SK-N-SH (cell line): ENCODE measurements at regions of chr14 and their contacts with region 1.

Region 1: GRCh38 chr14:100383727-100384158 is 60.6 kb downstream of the SLC25A47 start:
- DNase-seq: peak; percentile 87
- H3K4me3 ChIP-seq: peak overlapping the region in 1 of 2 experiments; percentile 15; a peak in 1 of 4 replicates
- H3K27ac ChIP-seq: peak overlapping the region in 1 of 2 experiments; percentile 90; a peak in 2 of 4 replicates
- H3K4me1 ChIP-seq: peaks cover 10 to 46% of the 10 kb centered on the region in 2 experiments
- H3K27me3 ChIP-seq: no peaks in the 10 kb centered on the region
- CTCF ChIP-seq: peak; percentile 83
- EP300 ChIP-seq: no peak
- RAD21 ChIP-seq: peak; percentile 88

Region 2: GRCh38 chr14:100213956-100214774 is 169.6 kb before region 1 on chr14:
- CTCF ChIA-PET with region 1: no interaction called
- POLR2A ChIA-PET with region 1: no interaction called
- DNase-seq: peak; percentile 98
- H3K4me3 ChIP-seq: peak overlapping the region; percentile 60
- H3K27ac ChIP-seq: peak overlapping the region in 1 of 2 experiments; percentile 85; a peak in 2 of 4 replicates
- H3K4me1 ChIP-seq: peaks cover 6 to 10% of the 10 kb centered on the region in 2 experiments; a peak in 1 of 4 replicates
- H3K27me3 ChIP-seq: no peaks in the 10 kb centered on the region
- CTCF ChIP-seq: no peak
- EP300 ChIP-seq: no peak
- RAD21 ChIP-seq: no peak

Region 3: DNA sequence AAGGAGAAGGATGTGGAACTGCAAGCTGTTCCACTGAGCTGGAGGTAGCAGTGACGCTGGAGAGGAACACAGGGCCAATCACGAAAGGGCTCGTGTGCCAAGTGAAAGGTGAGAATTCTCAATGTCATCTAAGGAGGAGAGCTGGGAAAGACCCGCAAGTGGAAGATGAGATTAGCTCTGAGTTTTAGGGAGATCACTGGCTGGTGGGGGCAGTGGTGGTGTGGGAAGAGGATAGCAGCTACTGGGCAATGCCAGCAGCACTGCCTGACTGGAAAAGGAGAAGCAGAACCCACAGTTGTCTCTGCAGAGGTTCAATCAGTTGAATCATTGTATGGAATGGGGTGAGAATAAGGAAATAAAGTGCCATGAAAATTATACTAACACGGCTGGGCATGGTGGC is 32.8 kb before region 1 on chr14:
- CTCF ChIA-PET with region 1: no interaction called
- POLR2A ChIA-PET with region 1: no interaction called
- DNase-seq: no peak
- H3K4me3 ChIP-seq: no peak overlapping the region
- H3K27ac ChIP-seq: no peak overlapping the region
- H3K4me1 ChIP-seq: peaks cover 0 to 3% of the 10 kb centered on the region in 2 experiments; a peak in 1 of 4 replicates
- H3K27me3 ChIP-seq: no peaks in the 10 kb centered on the region
- CTCF ChIP-seq: no peak
- EP300 ChIP-seq: no peak
- RAD21 ChIP-seq: no peak

Region 4: GRCh38 chr14:100406505-100407131 is 22.9 kb after region 1 on chr14:
- CTCF ChIA-PET with region 1: interaction called, 55 read pairs
- POLR2A ChIA-PET with region 1: no interaction called
- DNase-seq: no peak
- H3K4me3 ChIP-seq: no peak overlapping the region
- H3K27ac ChIP-seq: peak overlapping the region in 1 of 2 experiments; percentile 50; a peak in 1 of 4 replicates
- H3K4me1 ChIP-seq: peaks cover 0 to 75% of the 10 kb centered on the region in 2 experiments; a peak in 3 of 4 replicates
- H3K27me3 ChIP-seq: no peaks in the 10 kb centered on the region
- CTCF ChIP-seq: no peak
- EP300 ChIP-seq: no peak
- RAD21 ChIP-seq: no peak

Region 5: DNA sequence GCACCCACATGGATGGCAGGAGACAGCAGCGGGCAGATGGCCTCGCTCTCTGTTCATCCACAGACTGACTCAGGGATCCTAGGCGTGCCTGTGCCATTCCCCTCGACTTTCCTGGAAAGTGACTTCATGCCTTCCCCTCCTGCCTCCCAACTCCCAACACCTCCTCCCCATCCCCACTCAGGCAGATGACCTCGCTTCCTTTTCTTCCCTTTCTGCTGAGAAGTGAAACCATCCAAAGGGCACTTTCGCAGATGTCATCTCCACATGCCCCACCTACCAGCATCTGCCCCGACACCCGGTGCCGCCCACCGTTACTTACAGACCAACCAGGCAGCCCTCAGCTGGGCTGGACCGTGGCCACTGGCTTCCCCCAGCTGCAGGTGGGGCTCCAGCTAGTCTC is 173.9 kb after region 1 on chr14:
- CTCF ChIA-PET with region 1: interaction called, 22 read pairs
- POLR2A ChIA-PET with region 1: interaction called, 4 read pairs
- DNase-seq: no peak
- H3K4me3 ChIP-seq: no peak overlapping the region
- H3K27ac ChIP-seq: peak overlapping the region in 1 of 2 experiments; percentile 78; a peak in 1 of 4 replicates
- H3K4me1 ChIP-seq: peaks cover 0 to 97% of the 10 kb centered on the region in 2 experiments; a peak in 1 of 4 replicates
- H3K27me3 ChIP-seq: no peaks in the 10 kb centered on the region
- CTCF ChIP-seq: no peak
- EP300 ChIP-seq: no peak
- RAD21 ChIP-seq: no peak

Region 6: GRCh38 chr14:100654814-100655740 is 271.3 kb after region 1 on chr14:
- CTCF ChIA-PET with region 1: interaction called, 58 read pairs
- POLR2A ChIA-PET with region 1: interaction called, 5 read pairs
- DNase-seq: peak; percentile 84
- H3K4me3 ChIP-seq: no peak overlapping the region
- H3K27ac ChIP-seq: peak overlapping the region in 1 of 2 experiments; percentile 92; a peak in 2 of 4 replicates
- H3K4me1 ChIP-seq: peaks cover 0 to 75% of the 10 kb centered on the region in 2 experiments; a peak in 2 of 4 replicates
- H3K27me3 ChIP-seq: no peaks in the 10 kb centered on the region
- CTCF ChIP-seq: peak; percentile 59
- EP300 ChIP-seq: no peak
- RAD21 ChIP-seq: peak; percentile 58

Region 7: GRCh38 chr14:100726550-100727085 is 342.9 kb after region 1 on chr14 and contains the start of gene DLK1:
- CTCF ChIA-PET with region 1: interaction called, 15 read pairs
- POLR2A ChIA-PET with region 1: interaction called, 7 read pairs
- DNase-seq: peak; percentile 91
- H3K4me3 ChIP-seq: peak within 1 kb of the TSS in 1 of 2 experiments; percentile 58; a peak in 2 of 4 replicates
- H3K27ac ChIP-seq: peak within 1 kb of the TSS in 1 of 2 experiments; percentile 91; a peak in 2 of 4 replicates
- H3K4me1 ChIP-seq: peaks cover 0 to 79% of the 10 kb centered on the region in 2 experiments; a peak in 1 of 4 replicates
- H3K27me3 ChIP-seq: peaks cover 23% of the 10 kb centered on the region; the same call in 1 of the 2 replicates
- CTCF ChIP-seq: no peak
- EP300 ChIP-seq: no peak
- RAD21 ChIP-seq: no peak
- polyA plus RNA-seq, gene DLK1: 1.2 and 1.7 TPM in 2 replicates

Region 8: DNA sequence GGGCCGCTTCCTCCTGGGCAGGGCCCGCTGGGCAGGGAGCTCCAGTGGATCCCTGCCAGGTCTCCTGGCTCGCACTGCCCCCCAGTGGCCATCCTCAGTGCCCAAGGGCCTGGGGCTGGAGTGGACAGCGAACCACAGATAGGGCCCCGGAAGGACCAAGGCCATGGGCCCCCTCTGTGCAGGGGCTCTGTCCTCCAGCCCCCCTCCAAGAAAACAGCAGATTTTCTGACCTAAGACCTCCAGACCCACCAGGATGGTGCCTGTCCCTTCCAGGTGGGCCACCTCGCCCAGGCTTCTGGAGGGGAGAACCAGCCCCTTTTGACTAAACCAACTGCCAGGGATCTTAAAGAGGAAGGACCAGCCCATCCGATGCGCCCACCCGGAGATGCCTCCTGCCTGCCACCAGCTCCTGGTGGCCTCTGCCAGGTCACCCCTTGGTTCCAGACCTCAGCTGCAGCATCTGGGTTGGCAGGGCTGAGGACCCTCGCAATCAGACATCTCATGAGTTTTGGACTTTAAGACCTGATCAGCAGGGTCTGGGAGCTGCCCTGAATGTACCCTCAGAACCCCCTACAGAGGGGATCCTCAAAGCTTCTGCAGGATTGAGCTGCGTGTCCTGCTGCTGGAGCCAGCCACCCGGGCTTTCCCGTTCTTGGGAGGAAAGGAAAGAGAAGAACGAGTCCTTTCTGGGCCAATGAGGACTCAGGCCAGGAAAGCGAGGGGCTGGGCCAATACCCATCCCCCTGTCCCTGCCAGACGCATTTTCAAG is 851.8 kb after region 1 on chr14:
- CTCF ChIA-PET with region 1: interaction called, 24 read pairs
- POLR2A ChIA-PET with region 1: no interaction called
- DNase-seq: peak; percentile 95
- H3K4me3 ChIP-seq: no peak overlapping the region
- H3K27ac ChIP-seq: peak overlapping the region in 1 of 2 experiments; percentile 58; a peak in 1 of 4 replicates
- H3K4me1 ChIP-seq: peaks cover 0 to 37% of the 10 kb centered on the region in 2 experiments; a peak in 1 of 4 replicates
- H3K27me3 ChIP-seq: no peaks in the 10 kb centered on the region
- CTCF ChIP-seq: peak; percentile 70
- EP300 ChIP-seq: no peak
- RAD21 ChIP-seq: peak; percentile 93